Cardiac septum (tissue), 1 donor: ENCODE measurements at regions of chr7 and their contacts with region 1.

Region 1: GRCh38 chr7:70975754-70976153 is 156.2 kb upstream of the GALNT17 start:
- DNase-seq: no peak

Region 2: GRCh38 chr7:70953331-70953741 is 22.4 kb before region 1 on chr7:
- intact Hi-C with region 1: loop called (anchors 2 kb)
- DNase-seq: no peak